Activated naive CD4-positive, alpha-beta T cell treated with anti-CD3 and anti-CD28 coated beads for 36 hours (primary cell): ENCODE measurements at regions of chr20 and their contacts with region 1.

Region 1: GRCh38 chr20:32779500-32780211 is 17.5 kb downstream of the DNMT3B start:
- DNase-seq: no peak
- H3K4me3 Mint-ChIP-seq: no peak overlapping the region
- H3K27ac Mint-ChIP-seq: no peak overlapping the region
- H3K4me1 Mint-ChIP-seq: peaks cover 24% of the 10 kb centered on the region
- H3K27me3 Mint-ChIP-seq: no peaks in the 10 kb centered on the region

Region 2: DNA sequence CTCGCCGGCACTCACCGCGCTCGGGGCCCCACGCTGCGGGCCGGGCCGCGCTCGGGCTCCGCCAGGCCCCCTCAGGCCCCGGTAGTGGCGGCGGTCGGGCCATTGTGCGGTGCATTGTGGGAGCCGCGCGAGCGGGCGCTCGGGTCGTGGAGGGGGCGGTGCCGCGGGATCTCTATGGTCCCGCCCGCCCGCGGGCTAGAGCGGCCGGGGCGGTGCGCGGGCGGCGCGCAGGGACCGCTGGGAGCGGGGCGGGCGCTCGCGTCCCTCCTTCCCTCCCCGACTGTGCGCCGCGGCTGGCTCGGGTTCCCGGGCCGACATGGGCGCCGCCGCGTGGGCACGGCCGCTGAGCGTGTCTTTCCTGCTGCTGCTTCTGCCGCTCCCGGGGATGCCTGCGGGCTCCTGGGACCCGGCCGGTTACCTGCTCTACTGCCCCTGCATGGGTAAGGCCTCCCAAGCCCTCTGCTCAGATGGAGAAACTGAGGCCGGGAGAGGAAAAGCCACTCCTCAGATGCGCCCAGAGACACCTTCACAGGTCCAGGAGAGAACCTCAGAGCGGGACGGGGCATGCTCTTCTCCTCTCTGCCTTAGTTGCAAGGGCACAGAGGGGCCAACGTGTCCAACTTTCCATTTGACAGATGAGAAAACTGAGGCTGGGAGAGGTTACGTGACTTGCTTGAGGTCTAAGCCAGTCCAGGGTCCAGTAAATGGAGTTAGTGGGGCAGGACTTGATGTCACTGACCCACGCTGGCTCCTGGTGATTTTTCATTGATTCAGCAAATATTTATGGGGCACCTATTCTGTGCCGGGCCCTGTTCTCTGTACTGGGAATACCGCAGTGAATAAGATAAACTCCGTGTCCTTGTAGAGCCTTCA is 571.8 kb before region 1 on chr20 and contains the starts of genes PLAGL2 and POFUT1:
- CTCF ChIA-PET with region 1: no interaction called
- intact Hi-C with region 1: no loop called
- DNase-seq: peak; percentile 92
- H3K4me3 Mint-ChIP-seq: peak within 1 kb of the TSS; percentile 99
- H3K27ac Mint-ChIP-seq: peak within 1 kb of the TSS; percentile 98
- H3K4me1 Mint-ChIP-seq: peaks cover 65% of the 10 kb centered on the region
- H3K27me3 Mint-ChIP-seq: no peaks in the 10 kb centered on the region
- total RNA-seq, gene PLAGL2: 63.3 to 64.9 TPM
- total RNA-seq, gene POFUT1: 37.1 to 38.9 TPM

Region 3: GRCh38 chr20:32674362-32674789 is 105.3 kb before region 1 on chr20:
- CTCF ChIA-PET with region 1: interaction called, 352 read pairs
- intact Hi-C with region 1: loop called (anchors 1 kb)
- DNase-seq: peak; percentile 89
- H3K4me3 Mint-ChIP-seq: no peak overlapping the region
- H3K27ac Mint-ChIP-seq: no peak overlapping the region
- H3K4me1 Mint-ChIP-seq: peaks cover 15% of the 10 kb centered on the region
- H3K27me3 Mint-ChIP-seq: no peaks in the 10 kb centered on the region

Region 4: DNA sequence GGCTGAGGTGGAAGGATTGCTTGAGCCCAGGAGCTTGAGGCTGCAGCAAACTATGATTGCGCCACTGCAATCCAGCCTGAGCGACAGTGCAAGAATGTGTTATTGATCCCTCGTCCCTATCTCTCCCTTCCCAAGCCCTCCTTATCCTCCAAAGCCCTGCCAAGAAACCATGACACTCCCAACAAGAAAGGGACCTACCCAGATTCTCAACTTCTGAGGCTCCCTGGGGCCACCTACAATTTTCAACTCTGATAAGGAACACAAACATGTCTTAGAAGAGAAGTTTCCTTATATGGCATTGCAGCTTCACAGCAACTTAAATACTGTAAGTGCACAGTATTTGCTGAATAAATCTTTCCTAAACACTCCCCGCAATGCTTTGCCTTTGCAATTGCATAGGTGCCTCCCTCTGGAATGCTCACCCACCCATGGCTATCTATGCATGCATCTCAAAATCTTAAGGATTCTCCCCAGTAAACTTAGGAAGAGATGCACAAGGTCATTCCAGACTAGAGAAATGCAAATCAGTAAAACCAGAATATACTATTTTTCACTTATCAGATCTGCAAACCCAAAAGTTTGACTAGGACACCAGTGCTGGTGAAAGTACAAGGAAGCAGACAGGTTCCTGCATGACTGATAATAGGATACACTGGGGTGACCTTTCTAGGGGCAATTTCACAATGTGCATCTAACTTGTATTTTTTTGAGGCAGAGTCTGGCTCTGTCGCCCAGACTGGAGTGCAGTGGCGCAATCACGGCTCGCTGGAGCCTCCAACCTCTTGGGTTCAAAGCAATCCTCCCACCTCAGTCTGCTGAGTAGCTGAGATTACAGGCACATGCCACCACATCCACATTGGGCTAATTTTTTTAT is 48.0 kb before region 1 on chr20:
- CTCF ChIA-PET with region 1: interaction called, 32 read pairs
- intact Hi-C with region 1: no loop called
- DNase-seq: peak; percentile 17
- H3K4me3 Mint-ChIP-seq: no peak overlapping the region
- H3K27ac Mint-ChIP-seq: no peak overlapping the region
- H3K4me1 Mint-ChIP-seq: peaks cover 22% of the 10 kb centered on the region
- H3K27me3 Mint-ChIP-seq: no peaks in the 10 kb centered on the region

Region 5: GRCh38 chr20:32743237-32744112 is 36.2 kb before region 1 on chr20 and contains the start of gene COMMD7:
- CTCF ChIA-PET with region 1: interaction called, 20 read pairs
- intact Hi-C with region 1: loop called (anchors 2 kb)
- DNase-seq: peak; percentile 93
- H3K4me3 Mint-ChIP-seq: peak within 1 kb of the TSS; percentile 94
- H3K27ac Mint-ChIP-seq: peak within 1 kb of the TSS; percentile 95
- H3K4me1 Mint-ChIP-seq: peaks cover 34% of the 10 kb centered on the region
- H3K27me3 Mint-ChIP-seq: no peaks in the 10 kb centered on the region
- total RNA-seq, gene COMMD7: 33.8 to 36.6 TPM

Region 6: GRCh38 chr20:32767418-32768198 is 12.0 kb before region 1 on chr20:
- CTCF ChIA-PET with region 1: interaction called, 28 read pairs
- intact Hi-C with region 1: no loop called
- DNase-seq: no peak
- H3K4me3 Mint-ChIP-seq: no peak overlapping the region
- H3K27ac Mint-ChIP-seq: no peak overlapping the region
- H3K4me1 Mint-ChIP-seq: peaks cover 25% of the 10 kb centered on the region
- H3K27me3 Mint-ChIP-seq: no peaks in the 10 kb centered on the region

Region 7: DNA sequence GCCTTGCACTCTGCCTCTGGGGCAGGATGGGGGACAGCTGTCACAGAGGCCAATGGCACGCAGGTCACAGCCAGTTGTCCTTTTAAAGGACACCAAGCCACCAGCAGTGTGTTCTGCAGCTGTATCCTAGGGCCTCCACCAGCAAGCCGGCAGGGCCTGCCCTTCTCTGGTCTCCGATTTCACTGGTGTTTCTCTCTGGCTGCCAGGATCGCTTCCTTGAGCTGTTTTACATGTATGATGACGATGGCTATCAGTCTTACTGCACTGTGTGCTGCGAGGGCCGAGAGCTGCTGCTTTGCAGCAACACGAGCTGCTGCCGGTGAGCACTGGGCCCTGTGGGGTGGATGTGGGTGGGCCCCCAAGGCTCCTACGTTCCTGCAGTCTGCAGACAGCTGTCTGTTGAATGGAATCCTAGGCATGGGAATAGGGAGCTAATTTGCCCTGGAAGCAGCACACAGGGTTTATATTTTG is 17.4 kb after region 1 on chr20:
- CTCF ChIA-PET with region 1: interaction called, 19 read pairs
- intact Hi-C with region 1: no loop called
- DNase-seq: no peak
- H3K4me3 Mint-ChIP-seq: no peak overlapping the region
- H3K27ac Mint-ChIP-seq: no peak overlapping the region
- H3K4me1 Mint-ChIP-seq: peaks cover 37% of the 10 kb centered on the region
- H3K27me3 Mint-ChIP-seq: no peaks in the 10 kb centered on the region

Region 8: GRCh38 chr20:33337531-33338165 is 558.0 kb after region 1 on chr20:
- CTCF ChIA-PET with region 1: no interaction called
- intact Hi-C with region 1: no loop called
- DNase-seq: no peak
- H3K4me3 Mint-ChIP-seq: no peak overlapping the region
- H3K27ac Mint-ChIP-seq: no peak overlapping the region
- H3K4me1 Mint-ChIP-seq: peaks cover 6% of the 10 kb centered on the region
- H3K27me3 Mint-ChIP-seq: no peaks in the 10 kb centered on the region